IMR-90 (cell line): ENCODE measurements at regions of chr2 and their contacts with region 1.

Region 1: GRCh38 chr2:220198920-220199319 is 571.5 kb downstream of the SLC4A3 start:
- DNase-seq: peak; percentile 86
- ATAC-seq: peak; percentile 75
- H3K4me3 ChIP-seq: no peak overlapping the region
- H3K27ac ChIP-seq: no peak overlapping the region
- H3K4me1 ChIP-seq: peaks cover 2% of the 10 kb centered on the region; the same call in 1 of the 2 replicates
- H3K27me3 ChIP-seq: no peaks in the 10 kb centered on the region
- CTCF ChIP-seq: no peak
- POLR2A ChIP-seq: no peak
- RAD21 ChIP-seq: 0 out of 2 replicates have a peak, but pooled peaks have one; percentile 4

Region 2: GRCh38 chr2:220147161-220148038 is 51.5 kb before region 1 on chr2:
- CTCF ChIA-PET with region 1: no interaction called
- POLR2A ChIA-PET with region 1: no interaction called
- dilution Hi-C with region 1: no loop called
- in situ Hi-C with region 1: no loop called
- intact Hi-C with region 1: no loop called
- DNase-seq: peak; percentile 33
- ATAC-seq: peak; percentile 18; the same call in 1 of the 2 replicates
- H3K4me3 ChIP-seq: no peak overlapping the region
- H3K27ac ChIP-seq: no peak overlapping the region
- H3K4me1 ChIP-seq: peaks cover 4% of the 10 kb centered on the region; the same call in 1 of the 2 replicates
- H3K27me3 ChIP-seq: no peaks in the 10 kb centered on the region
- CTCF ChIP-seq: no peak
- POLR2A ChIP-seq: no peak
- RAD21 ChIP-seq: no peak

Region 3: GRCh38 chr2:220353897-220354296 is 155.0 kb after region 1 on chr2:
- CTCF ChIA-PET with region 1: no interaction called
- POLR2A ChIA-PET with region 1: no interaction called
- dilution Hi-C with region 1: no loop called
- in situ Hi-C with region 1: no loop called
- intact Hi-C with region 1: loop called (anchors 10 kb)
- DNase-seq: peak; percentile 54
- ATAC-seq: peak; percentile 80
- H3K4me3 ChIP-seq: no peak overlapping the region
- H3K27ac ChIP-seq: no peak overlapping the region
- H3K4me1 ChIP-seq: no peaks in the 10 kb centered on the region
- H3K27me3 ChIP-seq: no peaks in the 10 kb centered on the region
- CTCF ChIP-seq: no peak
- POLR2A ChIP-seq: no peak
- RAD21 ChIP-seq: no peak